Activated CD8-positive, alpha-beta memory T cell treated with anti-CD3 and anti-CD28 coated beads, Interleukin-2, amount 10 ng/mL, durations not matched to agents 7 days and 5 days (primary cell): ENCODE measurements at regions of chr6 and their contacts with region 1.

Region 1: DNA sequence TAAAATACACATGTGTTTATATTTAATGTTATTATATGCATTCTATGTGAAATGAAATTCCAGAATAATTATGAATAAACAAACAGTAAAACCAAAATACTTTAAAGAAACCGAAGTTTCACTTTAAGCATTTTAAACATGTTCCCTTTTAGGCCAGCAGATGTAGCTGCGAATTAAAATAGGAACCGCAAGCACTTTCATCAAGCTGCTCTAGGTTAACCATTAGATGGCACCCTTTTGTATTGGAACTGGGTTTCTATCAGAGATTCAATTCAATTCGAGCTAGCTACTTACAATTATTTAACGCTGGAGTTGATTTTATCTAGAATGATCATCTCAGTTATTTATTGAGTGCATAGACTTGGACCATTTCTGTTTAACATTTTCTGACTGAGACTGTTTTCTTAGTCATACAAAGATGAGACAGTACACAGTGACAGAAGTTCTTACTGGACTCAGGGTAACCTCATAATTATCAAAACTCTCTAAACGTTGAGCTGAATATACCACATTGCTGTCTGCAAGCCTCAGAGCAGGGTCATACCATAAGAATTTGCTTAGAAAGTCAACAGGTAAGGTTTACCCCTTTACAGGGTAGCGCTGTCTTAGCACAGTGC is 8.5 kb downstream of the TMEM242 start:
- DNase-seq: peak; percentile 55
- ATAC-seq: peak; percentile 98
- H3K4me3 Mint-ChIP-seq: no peak overlapping the region
- H3K27ac Mint-ChIP-seq: no peak overlapping the region
- H3K4me1 Mint-ChIP-seq: peaks cover 12% of the 10 kb centered on the region
- H3K27me3 Mint-ChIP-seq: no peaks in the 10 kb centered on the region

Region 2: DNA sequence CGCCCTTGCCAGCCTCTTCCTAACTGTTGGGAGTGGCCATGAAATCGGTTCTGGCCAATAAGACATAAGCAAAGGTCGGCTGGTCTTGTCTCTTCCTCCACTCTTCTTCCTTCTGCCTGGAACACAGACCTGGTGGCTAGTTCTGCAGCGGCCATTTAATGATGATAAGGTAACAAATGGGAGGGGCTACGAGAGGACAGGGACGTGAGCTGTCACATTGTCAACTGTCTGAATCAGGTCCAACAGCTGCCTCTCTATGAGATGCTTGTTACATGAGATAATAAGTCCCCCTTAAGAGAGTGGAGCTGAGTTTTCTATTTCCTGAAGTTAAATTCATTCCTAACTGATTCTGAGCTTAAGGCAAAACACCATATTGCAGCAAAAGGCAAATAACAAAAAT is 21.0 kb after region 1 on chr6:
- CTCF ChIA-PET with region 1: interaction called, 37 read pairs
- DNase-seq: no peak
- ATAC-seq: no peak
- H3K4me3 Mint-ChIP-seq: no peak overlapping the region
- H3K27ac Mint-ChIP-seq: no peak overlapping the region
- H3K4me1 Mint-ChIP-seq: no peaks in the 10 kb centered on the region
- H3K27me3 Mint-ChIP-seq: peaks cover 61% of the 10 kb centered on the region

Region 3: GRCh38 chr6:157614026-157614568 is 299.3 kb after region 1 on chr6:
- CTCF ChIA-PET with region 1: interaction called, 12 read pairs
- DNase-seq: no peak
- ATAC-seq: peak; percentile 36
- H3K4me3 Mint-ChIP-seq: no peak overlapping the region
- H3K27ac Mint-ChIP-seq: no peak overlapping the region
- H3K4me1 Mint-ChIP-seq: peaks cover 7% of the 10 kb centered on the region
- H3K27me3 Mint-ChIP-seq: no peaks in the 10 kb centered on the region

Region 4: DNA sequence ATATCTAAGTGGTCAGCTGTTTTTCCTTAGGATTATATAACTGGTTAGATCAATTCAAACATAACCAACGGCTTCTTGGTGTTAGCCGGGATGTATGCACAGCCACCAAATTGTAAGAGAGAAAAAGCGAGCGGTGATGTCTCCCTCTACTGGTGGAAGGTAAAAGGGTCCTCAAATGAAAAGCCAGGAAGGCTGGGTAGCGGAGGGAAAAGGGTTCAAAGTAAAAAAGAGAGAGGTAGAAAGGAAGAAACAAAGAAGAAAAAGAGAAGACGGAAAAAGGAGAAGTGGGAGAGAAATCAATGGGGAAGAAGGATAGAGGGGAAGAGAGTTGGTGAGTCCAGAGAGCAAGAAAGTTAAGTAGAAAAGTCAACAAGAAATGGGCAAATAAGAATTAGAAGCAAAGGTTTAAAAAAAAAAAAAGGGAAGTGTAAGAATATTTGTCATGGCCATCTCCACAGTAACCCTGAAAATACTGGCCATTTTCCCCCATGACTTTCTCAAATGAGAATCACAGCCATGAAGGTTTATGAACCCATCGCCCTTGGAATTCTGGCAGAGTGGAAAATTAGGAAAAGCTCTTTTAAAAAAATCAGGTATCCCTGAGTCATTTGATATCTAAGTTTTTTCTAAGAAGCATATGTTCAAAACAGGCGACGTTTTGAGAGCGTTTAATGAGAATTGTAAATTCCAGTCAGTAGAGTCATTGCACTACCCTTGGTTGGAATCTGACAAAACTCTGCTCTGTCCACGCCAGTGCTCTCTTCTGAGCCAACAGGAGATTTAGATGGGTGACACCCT is 352.6 kb after region 1 on chr6:
- CTCF ChIA-PET with region 1: interaction called, 61 read pairs
- DNase-seq: peak; percentile 68
- ATAC-seq: peak; percentile 60
- H3K4me3 Mint-ChIP-seq: no peak overlapping the region
- H3K27ac Mint-ChIP-seq: no peak overlapping the region
- H3K4me1 Mint-ChIP-seq: peaks cover 17% of the 10 kb centered on the region
- H3K27me3 Mint-ChIP-seq: peaks cover 5% of the 10 kb centered on the region